ENCODE measurements at regions of chrX and their contacts with region 1.

Region 1: GRCh38 chrX:118644378-118644777 is 83.0 kb upstream of the IL13RA1 start:
- DNase-seq: peak in 1 of 4 donors; percentile 26
- ATAC-seq: peak; percentile 68
- H3K4me3 ChIP-seq: no peak overlapping the region
- H3K27ac ChIP-seq: no peak overlapping the region
- H3K4me1 ChIP-seq: no peaks in the 10 kb centered on the region
- H3K27me3 ChIP-seq: no peaks in the 10 kb centered on the region
- CTCF ChIP-seq: peak; percentile 11 to 66 (median 61)
- POLR2A ChIP-seq: no peak

Region 2: GRCh38 chrX:118770133-118770760 is 125.9 kb after region 1 on chrX:
- intact Hi-C with region 1: no loop called
- DNase-seq: no peak
- ATAC-seq: no peak
- H3K4me3 ChIP-seq: no peak overlapping the region
- H3K27ac ChIP-seq: no peak overlapping the region
- H3K4me1 ChIP-seq: no peaks in the 10 kb centered on the region
- H3K27me3 ChIP-seq: no peaks in the 10 kb centered on the region
- CTCF ChIP-seq: no peak
- POLR2A ChIP-seq: no peak

Region 3: DNA sequence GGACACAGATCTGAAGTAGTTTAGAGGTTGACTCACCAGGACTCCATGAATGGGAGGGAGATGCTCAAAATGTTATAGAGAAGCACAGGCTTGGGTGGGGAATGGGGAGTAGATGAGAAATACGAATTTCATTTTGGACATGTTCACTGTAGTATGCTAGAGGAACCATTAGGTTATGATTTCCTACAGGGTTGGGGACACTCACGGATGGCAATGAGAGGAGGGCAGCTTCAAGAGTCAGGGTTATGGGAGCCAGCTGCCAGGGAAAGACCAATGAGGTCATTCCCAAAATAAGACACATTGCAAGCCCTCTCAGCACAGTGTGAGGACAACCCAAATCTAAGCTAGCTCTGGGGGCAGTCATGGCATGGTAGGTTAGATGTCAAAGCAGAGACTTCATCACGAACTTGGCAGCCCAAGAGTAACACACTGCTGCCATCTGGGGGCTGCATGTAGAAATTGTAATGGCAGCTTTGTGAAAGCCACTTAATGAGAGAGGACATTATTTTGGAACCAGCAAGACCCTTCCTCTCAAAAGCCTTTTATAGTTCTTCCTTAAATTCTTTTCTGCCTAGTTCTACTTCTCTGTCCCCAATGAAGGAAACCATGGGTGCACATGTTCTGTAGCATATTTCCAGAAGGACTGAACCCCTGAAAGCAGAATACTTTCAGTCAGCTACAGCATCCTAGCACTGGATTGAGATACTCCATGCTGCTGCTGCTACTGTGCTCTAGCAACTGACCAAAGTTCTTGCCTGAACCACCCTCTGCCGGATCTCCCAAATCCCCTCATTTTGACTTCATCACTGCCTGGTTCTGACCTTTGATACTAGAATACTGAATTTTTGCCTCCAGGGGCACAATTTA is 163.0 kb after region 1 on chrX:
- intact Hi-C with region 1: loop called (anchors 5 kb)
- DNase-seq: peak; percentile 31 to 54 (median 45)
- ATAC-seq: peak; percentile 47
- H3K4me3 ChIP-seq: no peak overlapping the region
- H3K27ac ChIP-seq: no peak overlapping the region
- H3K4me1 ChIP-seq: no peaks in the 10 kb centered on the region
- H3K27me3 ChIP-seq: no peaks in the 10 kb centered on the region
- CTCF ChIP-seq: peak; percentile 41 to 77 (median 69)
- POLR2A ChIP-seq: no peak

Region 4: GRCh38 chrX:118948270-118948669 is 303.9 kb after region 1 on chrX:
- intact Hi-C with region 1: no loop called
- DNase-seq: no peak
- ATAC-seq: no peak
- H3K4me3 ChIP-seq: no peak overlapping the region
- H3K27ac ChIP-seq: no peak overlapping the region
- H3K4me1 ChIP-seq: no peaks in the 10 kb centered on the region
- H3K27me3 ChIP-seq: no peaks in the 10 kb centered on the region
- CTCF ChIP-seq: no peak
- POLR2A ChIP-seq: no peak

Measured in body of pancreas (tissue), 4 donors.